Breast epithelium (tissue), 4 donors: ENCODE measurements at regions of chr9 and their contacts with region 1.

Region 1: GRCh38 chr9:124886866-124887492 is 25.0 kb downstream of the ARPC5L start:
- DNase-seq: no peak
- H3K4me3 ChIP-seq: no peak overlapping the region
- H3K27ac ChIP-seq: no peak overlapping the region
- H3K4me1 ChIP-seq: no peaks in the 10 kb centered on the region
- H3K27me3 ChIP-seq: no peaks in the 10 kb centered on the region
- CTCF ChIP-seq: no peak
- POLR2A ChIP-seq: no peak

Region 2: DNA sequence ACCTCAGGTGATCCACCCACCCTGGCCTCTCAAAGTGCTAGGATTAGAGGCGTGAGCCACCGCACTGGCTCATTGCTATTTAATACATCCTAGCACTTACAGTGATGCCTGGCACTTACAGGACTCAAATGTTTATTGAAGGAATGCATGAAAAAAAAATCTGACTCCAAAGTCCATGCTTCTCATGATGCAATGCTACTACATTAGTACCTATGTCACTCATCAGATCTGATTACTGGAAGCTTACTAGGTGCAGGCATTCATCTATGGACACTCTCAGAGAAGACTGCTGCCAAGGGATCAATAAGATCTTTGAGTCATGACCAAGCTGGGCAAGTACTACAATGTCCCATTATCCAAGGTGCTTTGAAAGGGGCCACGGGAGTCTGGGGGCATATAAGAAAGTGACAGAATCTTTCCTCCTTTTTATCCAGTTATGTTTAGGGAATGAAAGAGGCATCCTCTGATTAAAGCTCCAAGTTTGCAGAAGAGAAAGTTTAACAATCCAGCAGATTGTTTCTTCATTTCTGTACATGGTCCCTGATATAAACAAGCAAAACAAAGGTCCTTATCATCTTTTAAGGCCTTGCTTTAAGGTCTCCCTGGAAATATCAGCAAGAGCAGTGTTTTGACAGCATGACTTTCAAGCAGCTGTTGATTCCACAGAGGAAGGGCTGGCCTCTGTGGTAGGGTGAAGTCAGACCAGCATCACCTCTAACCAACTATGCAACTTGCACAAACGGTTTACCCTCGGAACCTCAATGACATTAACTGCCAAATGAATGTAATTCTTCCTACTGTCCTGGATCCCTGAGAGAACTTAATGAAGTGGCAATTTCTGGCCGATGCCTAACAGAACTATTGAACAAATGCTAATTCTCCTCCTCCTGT is 10.8 kb after region 1 on chr9:
- intact Hi-C with region 1: no loop called
- DNase-seq: no peak
- H3K4me3 ChIP-seq: no peak overlapping the region
- H3K27ac ChIP-seq: no peak overlapping the region
- H3K4me1 ChIP-seq: no peaks in the 10 kb centered on the region
- H3K27me3 ChIP-seq: no peaks in the 10 kb centered on the region
- CTCF ChIP-seq: no peak
- POLR2A ChIP-seq: no peak

Region 3: GRCh38 chr9:125509476-125509875 is 622.5 kb after region 1 on chr9:
- intact Hi-C with region 1: no loop called
- DNase-seq: no peak
- H3K4me3 ChIP-seq: no peak overlapping the region
- H3K27ac ChIP-seq: no peak overlapping the region
- H3K4me1 ChIP-seq: peaks cover 0 to 3% of the 10 kb centered on the region in 2 donors
- H3K27me3 ChIP-seq: no peaks in the 10 kb centered on the region
- CTCF ChIP-seq: no peak
- POLR2A ChIP-seq: no peak

Region 4: GRCh38 chr9:125694478-125694877 is 807.5 kb after region 1 on chr9:
- intact Hi-C with region 1: no loop called
- DNase-seq: no peak
- H3K4me3 ChIP-seq: no peak overlapping the region
- H3K27ac ChIP-seq: no peak overlapping the region
- H3K4me1 ChIP-seq: no peaks in the 10 kb centered on the region
- H3K27me3 ChIP-seq: no peaks in the 10 kb centered on the region
- CTCF ChIP-seq: no peak
- POLR2A ChIP-seq: no peak

Region 5: DNA sequence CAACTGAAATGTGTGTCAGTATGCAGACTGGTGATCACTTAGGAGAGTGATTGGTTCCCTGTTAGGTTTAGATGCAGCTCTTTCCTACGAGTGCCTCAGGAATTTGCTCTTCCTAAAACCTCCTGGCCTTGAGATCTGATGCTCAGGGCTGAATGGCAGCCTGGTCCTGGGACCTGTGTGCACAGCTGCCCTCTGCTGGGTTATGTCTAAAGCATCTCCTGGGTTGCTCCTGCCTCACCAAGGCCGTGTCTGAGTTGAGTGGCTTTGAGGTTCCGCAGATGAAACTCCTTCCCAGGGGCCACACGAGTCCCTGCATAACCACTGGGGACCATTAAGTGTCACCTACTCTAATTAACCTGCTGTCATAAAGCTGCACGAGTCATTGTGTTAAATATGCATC is 1499.1 kb after region 1 on chr9:
- intact Hi-C with region 1: loop called (anchors 5 kb)
- DNase-seq: no peak
- H3K4me3 ChIP-seq: no peak overlapping the region
- H3K27ac ChIP-seq: no peak overlapping the region
- H3K4me1 ChIP-seq: no peaks in the 10 kb centered on the region
- H3K27me3 ChIP-seq: no peaks in the 10 kb centered on the region
- CTCF ChIP-seq: no peak
- POLR2A ChIP-seq: no peak